Transverse colon (tissue), 4 donors: ENCODE measurements at regions of chr20 and their contacts with region 1.

Region 1: DNA sequence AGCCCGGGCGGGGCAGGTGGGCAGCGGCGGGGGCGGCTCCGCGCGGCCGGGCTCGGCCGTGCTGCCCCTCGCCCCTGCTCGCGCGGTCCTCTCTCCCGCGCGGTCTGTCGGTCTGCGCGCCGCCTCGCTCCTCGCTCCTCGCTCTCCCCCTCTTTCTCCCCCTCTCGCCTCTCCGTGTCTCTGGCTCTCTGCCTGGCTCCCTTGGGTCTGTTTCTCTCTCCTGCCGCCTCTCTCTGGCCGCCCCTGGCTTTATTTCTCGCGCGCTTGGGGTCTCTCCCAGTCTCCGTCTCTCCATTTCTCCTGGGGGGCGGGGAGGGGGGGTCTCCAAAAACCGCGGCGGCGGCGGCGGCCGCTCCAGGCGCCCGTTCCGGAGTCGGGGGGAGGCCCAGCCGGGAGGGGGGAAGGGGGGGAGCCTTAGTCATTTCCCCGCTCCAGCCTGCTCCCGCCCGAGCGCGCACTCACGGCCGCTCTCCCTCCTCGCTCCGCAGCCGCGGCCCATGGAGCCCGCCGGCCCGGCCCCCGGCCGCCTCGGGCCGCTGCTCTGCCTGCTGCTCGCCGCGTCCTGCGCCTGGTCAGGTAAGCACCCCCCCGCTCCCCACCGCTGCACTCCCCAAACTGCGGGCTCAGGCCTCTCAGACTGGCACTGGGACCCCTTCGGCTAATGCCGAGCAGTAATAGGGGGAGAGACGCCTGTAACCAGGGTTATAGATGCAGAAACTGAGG is at the start of gene SIRPA:
- DNase-seq: peak; percentile 49
- H3K4me3 ChIP-seq: peak within 1 kb of the TSS; percentile 50 to 73 (median 64)
- H3K27ac ChIP-seq: peak within 1 kb of the TSS; percentile 80 to 90 (median 86)
- H3K4me1 ChIP-seq: peaks cover 0 to 49% (median 17%) of the 10 kb centered on the region in 4 donors
- H3K27me3 ChIP-seq: peaks cover 11% of the 10 kb centered on the region
- CTCF ChIP-seq: no peak
- EP300 ChIP-seq: no peak
- POLR2A ChIP-seq: no peak
- total RNA-seq, gene SIRPA: 9.0 to 46.6 (median 18.6) TPM

Region 2: DNA sequence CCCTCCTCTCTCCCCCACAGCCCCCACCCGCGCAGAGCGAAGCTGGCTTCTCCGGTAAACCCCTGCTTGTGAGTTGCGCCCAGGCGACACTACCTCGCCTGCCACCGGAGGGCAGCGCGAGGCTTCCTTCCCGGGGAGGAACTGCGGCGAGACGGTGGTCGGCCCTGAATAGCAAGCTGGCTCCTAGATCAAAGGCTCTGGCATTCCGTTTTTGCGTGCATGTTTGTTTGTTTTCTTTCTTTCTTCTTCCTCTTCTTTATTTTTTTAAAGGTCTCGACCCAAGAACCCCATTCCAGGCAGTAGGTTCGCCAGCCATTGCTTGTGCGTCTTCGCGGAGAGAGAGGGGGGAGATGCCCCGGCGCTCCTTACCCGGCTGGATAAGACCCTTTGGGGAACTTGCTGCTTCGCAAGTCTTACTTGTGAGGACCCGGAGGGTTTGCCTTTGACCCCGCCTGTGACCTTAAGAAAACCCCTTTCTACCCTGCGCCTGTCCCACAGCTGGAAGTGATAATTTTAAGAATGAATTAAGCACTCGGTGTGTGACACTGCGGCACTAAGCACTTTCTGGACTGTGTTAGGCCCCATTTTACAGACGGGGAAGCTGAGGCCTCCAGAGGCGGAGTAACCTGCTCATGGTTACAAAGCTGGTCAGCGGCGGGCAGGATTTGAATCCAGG is 92.6 kb before region 1 on chr20:
- in situ Hi-C with region 1: no loop called
- intact Hi-C with region 1: loop called (anchors 1 kb)
- DNase-seq: peak; percentile 56
- H3K4me3 ChIP-seq: peak overlapping the region in 3 of 4 donors; percentile 46 to 72 (median 59)
- H3K27ac ChIP-seq: peak overlapping the region; percentile 60 to 85 (median 74)
- H3K4me1 ChIP-seq: peaks cover 7 to 41% (median 27%) of the 10 kb centered on the region in 4 donors
- H3K27me3 ChIP-seq: peaks cover 22% of the 10 kb centered on the region
- CTCF ChIP-seq: peak; percentile 49 to 69 (median 63)
- EP300 ChIP-seq: no peak
- POLR2A ChIP-seq: no peak

Region 3: DNA sequence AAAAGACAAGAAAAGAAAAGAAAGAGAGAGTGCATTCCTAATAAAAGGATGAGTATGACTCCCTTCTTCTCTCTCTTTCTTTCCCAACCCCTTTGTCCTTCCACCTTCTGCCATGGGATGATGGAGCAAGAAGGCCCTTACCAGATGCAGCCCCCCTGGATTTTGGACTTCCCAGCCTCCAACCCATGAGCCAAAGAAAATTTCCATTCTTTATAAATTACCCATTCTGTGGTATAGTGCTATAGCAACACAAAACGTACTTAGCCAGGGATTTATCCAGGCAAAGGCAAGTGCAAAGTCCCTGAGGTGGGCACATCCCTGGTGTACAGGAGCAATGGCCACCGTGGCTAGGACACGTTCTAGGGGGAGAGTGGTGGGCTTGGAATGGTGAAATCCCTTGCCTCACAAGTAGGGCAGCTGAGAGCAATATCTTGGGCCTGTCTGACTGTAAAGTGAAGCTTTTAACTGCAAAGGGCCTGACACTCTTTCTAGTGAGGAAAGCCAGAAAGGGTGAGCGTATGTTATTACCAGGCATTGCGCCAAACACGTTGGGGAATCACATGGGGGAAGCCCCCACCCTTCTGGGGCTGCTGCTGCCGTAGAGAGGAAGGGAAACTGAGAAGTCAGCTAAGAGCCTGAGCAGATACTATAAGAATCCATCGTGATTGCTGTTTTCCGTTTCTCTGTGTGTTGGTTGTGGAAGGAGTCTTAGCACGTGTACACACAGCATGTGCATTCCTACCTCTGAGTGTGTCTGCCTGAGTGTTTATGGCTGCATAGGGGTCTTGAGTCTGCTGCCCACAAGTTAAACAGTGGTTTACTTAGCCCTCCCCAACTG is 50.6 kb before region 1 on chr20:
- in situ Hi-C with region 1: no loop called
- intact Hi-C with region 1: loop called (anchors 10 kb)
- DNase-seq: peak; percentile 64
- H3K4me3 ChIP-seq: no peak overlapping the region
- H3K27ac ChIP-seq: peak overlapping the region; percentile 49 to 82 (median 69)
- H3K4me1 ChIP-seq: peaks cover 0 to 21% (median 9%) of the 10 kb centered on the region in 4 donors
- H3K27me3 ChIP-seq: no peaks in the 10 kb centered on the region
- CTCF ChIP-seq: no peak
- EP300 ChIP-seq: no peak
- POLR2A ChIP-seq: no peak

Region 4: GRCh38 chr20:2005831-2006426 is 110.8 kb after region 1 on chr20:
- in situ Hi-C with region 1: no loop called
- intact Hi-C with region 1: no loop called
- DNase-seq: peak; percentile 63
- H3K4me3 ChIP-seq: no peak overlapping the region
- H3K27ac ChIP-seq: no peak overlapping the region
- H3K4me1 ChIP-seq: no peaks in the 10 kb centered on the region
- H3K27me3 ChIP-seq: peaks cover 22% of the 10 kb centered on the region
- CTCF ChIP-seq: no peak
- EP300 ChIP-seq: no peak
- POLR2A ChIP-seq: no peak

Region 5: GRCh38 chr20:2101865-2102584 is 206.9 kb after region 1 on chr20:
- in situ Hi-C with region 1: no loop called
- intact Hi-C with region 1: loop called (anchors 5 kb)
- DNase-seq: peak; percentile 91
- H3K4me3 ChIP-seq: peak overlapping the region; percentile 45 to 89 (median 69)
- H3K27ac ChIP-seq: peak overlapping the region; percentile 95 to 98 (median 97)
- H3K4me1 ChIP-seq: peaks cover 16 to 33% (median 21%) of the 10 kb centered on the region in 4 donors
- H3K27me3 ChIP-seq: no peaks in the 10 kb centered on the region
- CTCF ChIP-seq: peak in 3 of 5 experiments; percentile 9 to 55 (median 51)
- EP300 ChIP-seq: no peak
- POLR2A ChIP-seq: no peak